ENCODE measurements at regions of chr7 and their contacts with region 1.

Region 1: GRCh38 chr7:132580717-132581285 is 4.5 kb upstream of the PLXNA4 start:
- DNase-seq: peak; percentile 65
- CTCF ChIP-seq: peak; percentile 89

Region 2: DNA sequence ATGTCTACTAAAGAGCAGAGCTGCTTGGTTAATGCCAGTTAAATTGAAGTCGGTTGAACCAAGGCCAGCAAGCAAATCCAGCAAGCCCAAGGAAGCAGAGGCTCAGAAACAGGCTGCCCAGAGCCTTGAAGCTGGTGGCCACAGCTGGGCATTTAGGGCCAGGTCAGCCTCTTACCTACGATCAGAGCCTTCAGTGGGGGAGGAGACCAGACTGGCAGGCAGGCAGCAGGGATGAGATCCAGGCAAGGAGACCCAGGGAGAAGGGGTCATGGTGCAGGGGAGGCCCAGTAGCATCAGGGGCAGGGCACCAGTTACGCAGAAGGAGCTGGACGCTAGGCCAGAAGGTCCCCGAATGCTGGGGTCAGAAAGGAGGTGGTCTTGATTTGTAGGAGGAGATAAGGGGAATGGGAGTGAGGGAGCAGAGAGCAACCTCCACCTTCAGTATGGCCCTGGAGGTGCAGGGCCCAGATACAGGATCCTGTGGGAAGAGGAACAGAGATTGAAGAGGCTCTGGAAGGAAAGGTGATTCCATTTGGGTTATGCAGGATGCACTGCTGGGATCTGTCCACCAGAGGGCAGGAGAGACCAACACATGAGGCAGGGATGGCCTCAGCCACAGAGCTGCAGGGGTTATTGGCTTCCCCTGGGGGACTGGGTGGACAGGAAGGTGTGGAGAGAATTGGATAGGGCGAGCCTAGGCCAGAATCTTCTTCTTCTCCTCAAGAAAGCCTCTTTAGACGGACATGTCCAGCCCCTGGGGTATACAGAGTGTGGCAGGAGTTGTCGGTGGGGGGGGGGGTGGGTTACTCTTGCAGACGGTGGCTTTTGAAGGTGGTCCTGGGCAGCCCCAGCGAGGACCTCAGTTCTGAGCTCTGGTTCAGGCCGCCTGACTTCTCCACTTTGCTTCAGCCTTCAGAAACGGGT is 891.8 kb before region 1 on chr7:
- CTCF ChIA-PET with region 1: interaction called, 25 read pairs
- POLR2A ChIA-PET with region 1: no interaction called
- DNase-seq: peak; percentile 87
- CTCF ChIP-seq: peak; percentile 96

Region 3: DNA sequence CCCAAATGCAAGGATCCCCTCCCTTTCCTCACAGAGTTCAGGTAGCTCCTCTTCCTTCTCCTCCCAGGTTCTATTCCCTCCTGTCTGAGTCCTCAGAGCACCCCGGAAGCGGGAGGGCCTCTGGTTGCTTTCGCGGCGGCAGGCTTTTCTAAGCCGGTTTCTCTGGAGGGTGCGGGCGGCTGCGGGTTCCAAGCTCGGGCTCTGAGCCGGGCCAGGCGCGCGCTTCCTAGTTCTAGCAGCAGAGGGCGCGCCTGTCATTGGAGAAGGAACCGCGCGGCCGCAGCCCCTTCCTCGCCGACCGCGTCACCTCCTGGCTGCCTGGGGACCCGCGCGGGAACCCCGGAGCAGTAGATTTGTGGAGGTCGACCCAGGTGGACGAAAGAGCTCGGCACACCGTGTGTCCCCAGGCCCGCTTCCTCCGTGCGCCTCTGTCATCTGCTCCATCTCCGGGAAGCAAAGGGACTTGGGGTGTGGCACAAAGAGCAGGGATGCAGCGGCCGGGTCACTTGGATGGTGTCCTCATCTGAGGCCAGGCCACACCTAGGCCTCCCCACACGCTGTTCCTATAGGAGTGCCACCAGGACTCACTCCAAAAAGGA is 635.4 kb before region 1 on chr7:
- CTCF ChIA-PET with region 1: interaction called, 12 read pairs
- POLR2A ChIA-PET with region 1: no interaction called
- DNase-seq: peak; percentile 72
- CTCF ChIP-seq: peak; percentile 84

Region 4: GRCh38 chr7:132318352-132319318 is 262.2 kb before region 1 on chr7:
- CTCF ChIA-PET with region 1: interaction called, 17 read pairs
- POLR2A ChIA-PET with region 1: no interaction called
- DNase-seq: peak; percentile 83
- CTCF ChIP-seq: peak; percentile 96

Region 5: DNA sequence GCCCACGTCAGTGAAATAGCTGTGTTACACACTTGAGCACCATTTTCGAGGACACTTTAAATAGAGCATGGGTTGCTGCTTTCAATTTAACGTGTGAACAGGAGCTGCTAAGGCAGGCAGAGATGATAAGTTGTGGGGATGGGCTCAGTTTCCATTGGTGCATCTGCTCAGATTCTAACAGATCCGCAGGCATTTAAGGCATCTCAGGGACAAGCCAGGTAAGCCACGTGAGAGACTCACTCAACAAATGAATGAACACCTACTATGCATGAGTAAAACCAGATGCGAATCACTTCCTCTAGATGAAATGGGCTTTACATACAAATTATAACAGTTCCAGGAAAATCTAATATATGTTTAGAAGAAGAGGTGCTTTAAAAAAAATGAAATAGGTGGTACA is 39.1 kb before region 1 on chr7:
- CTCF ChIA-PET with region 1: interaction called, 11 read pairs
- POLR2A ChIA-PET with region 1: no interaction called
- DNase-seq: no peak
- CTCF ChIP-seq: no peak

Region 6: DNA sequence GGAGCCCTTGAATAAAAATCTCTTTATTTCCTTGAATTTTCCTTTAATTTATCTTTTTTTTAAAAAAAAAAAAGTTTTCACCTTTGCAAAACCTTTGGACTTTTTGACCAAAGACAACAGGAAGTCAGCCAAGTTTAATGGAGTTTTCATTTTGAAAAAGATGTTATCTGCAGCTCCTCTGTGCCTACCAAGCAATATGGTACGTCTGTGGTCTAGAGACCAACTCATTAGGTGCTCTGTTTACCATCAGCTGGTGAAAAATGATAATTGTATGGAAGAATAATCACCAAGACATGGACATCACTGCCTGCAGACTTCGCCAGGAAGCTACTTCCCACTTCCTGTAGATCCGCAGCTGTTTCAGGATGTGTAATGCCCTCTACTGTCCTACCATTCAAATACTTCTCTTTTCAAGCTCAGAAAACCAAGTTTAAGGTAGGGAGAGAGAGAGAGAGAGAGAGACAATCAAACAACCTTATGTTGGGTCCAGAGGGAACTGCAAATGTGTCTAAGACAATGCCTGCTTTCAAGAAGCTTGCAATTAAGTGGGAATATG is 23.2 kb before region 1 on chr7:
- CTCF ChIA-PET with region 1: interaction called, 11 read pairs
- POLR2A ChIA-PET with region 1: no interaction called
- DNase-seq: no peak
- CTCF ChIP-seq: no peak

Region 7: GRCh38 chr7:132568962-132569361 is 11.8 kb before region 1 on chr7:
- CTCF ChIA-PET with region 1: interaction called, 18 read pairs
- POLR2A ChIA-PET with region 1: no interaction called
- DNase-seq: no peak
- CTCF ChIP-seq: no peak